ENCODE measurements at regions of chr10 and their contacts with region 1.

Region 1: GRCh38 chr10:5844345-5845048 is 31.3 kb upstream of the GDI2 start:
- DNase-seq: no peak
- H3K4me3 Mint-ChIP-seq: no peak overlapping the region
- H3K27ac Mint-ChIP-seq: peak overlapping the region; percentile 11
- H3K4me1 Mint-ChIP-seq: peaks cover 25% of the 10 kb centered on the region
- H3K27me3 Mint-ChIP-seq: peaks cover 5% of the 10 kb centered on the region

Region 2: DNA sequence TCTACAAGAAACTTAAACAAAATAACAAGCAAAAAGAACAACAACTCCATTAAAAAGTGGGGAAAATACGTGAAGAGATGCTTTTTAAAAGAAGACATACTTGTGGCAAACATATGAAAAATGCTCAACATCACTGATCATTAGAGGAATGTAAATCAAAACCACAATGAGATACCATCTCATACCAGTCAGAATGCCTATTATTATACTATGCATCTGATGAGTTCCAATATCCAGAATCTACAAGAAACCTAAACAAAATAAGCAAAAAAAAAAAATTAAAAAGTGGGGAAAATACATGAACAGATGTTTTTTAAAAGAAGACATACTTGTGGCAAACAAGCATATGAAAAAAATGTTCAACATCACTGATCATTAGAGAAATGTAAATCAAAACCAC is 779.8 kb before region 1 on chr10:
- CTCF ChIA-PET with region 1: no interaction called
- POLR2A ChIA-PET with region 1: no interaction called
- intact Hi-C with region 1: no loop called
- DNase-seq: no peak
- H3K4me3 Mint-ChIP-seq: no peak overlapping the region
- H3K27ac Mint-ChIP-seq: no peak overlapping the region
- H3K4me1 Mint-ChIP-seq: no peaks in the 10 kb centered on the region
- H3K27me3 Mint-ChIP-seq: no peaks in the 10 kb centered on the region

Region 3: DNA sequence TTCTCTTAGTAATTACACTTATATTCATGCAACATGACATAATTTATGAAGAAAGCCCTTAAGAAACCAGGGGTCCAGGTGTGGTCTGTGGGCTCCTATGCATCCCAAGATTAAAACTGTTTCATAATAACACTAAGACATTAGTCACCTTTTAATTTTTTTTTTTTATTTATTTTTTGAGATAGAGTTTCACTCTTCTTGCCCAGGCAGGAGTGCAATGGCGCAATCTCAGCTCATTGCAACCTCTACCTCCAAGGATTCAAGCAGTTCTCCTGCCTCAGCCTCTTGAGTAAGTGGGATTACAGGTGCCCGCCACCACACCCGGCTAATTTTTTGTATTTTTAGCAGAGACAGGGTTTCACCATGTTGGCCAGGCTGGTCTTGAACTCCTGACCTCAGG is 43.7 kb before region 1 on chr10:
- CTCF ChIA-PET with region 1: no interaction called
- POLR2A ChIA-PET with region 1: no interaction called
- intact Hi-C with region 1: no loop called
- DNase-seq: no peak
- H3K4me3 Mint-ChIP-seq: no peak overlapping the region
- H3K27ac Mint-ChIP-seq: no peak overlapping the region
- H3K4me1 Mint-ChIP-seq: peaks cover 16% of the 10 kb centered on the region
- H3K27me3 Mint-ChIP-seq: no peaks in the 10 kb centered on the region

Region 4: GRCh38 chr10:5818894-5819293 is 25.6 kb before region 1 on chr10:
- CTCF ChIA-PET with region 1: interaction called, 11 read pairs
- POLR2A ChIA-PET with region 1: interaction called, 12 read pairs
- intact Hi-C with region 1: loop called (anchors 1 kb)
- DNase-seq: no peak
- H3K4me3 Mint-ChIP-seq: no peak overlapping the region
- H3K27ac Mint-ChIP-seq: no peak overlapping the region
- H3K4me1 Mint-ChIP-seq: peaks cover 56% of the 10 kb centered on the region
- H3K27me3 Mint-ChIP-seq: no peaks in the 10 kb centered on the region

Region 5: DNA sequence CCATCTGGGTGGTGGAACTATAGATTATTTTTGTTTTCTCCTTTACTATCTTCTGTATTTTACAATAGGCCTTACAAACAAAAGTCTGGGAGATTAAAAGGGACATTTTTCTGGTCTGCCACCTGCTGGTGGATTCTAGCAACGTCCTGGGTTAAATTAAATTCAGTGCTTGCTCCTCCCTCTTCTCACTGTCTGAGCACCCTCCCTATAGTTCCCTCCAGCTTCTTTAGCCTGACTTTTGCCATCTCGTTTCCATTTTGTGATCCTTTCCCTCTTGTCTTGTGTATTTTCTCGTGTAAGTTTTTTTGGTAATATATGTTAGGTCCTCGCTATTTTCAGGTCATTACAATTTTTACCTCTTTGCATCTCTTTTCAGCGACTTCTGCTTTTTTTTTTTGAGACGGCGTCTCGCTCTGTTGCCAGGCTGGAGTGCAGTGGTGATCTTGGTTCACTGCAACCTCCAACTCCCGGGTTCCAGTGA is 29.1 kb after region 1 on chr10:
- CTCF ChIA-PET with region 1: interaction called, 16 read pairs
- POLR2A ChIA-PET with region 1: no interaction called
- intact Hi-C with region 1: no loop called
- DNase-seq: peak; percentile 81
- H3K4me3 Mint-ChIP-seq: no peak overlapping the region
- H3K27ac Mint-ChIP-seq: no peak overlapping the region
- H3K4me1 Mint-ChIP-seq: peaks cover 2% of the 10 kb centered on the region
- H3K27me3 Mint-ChIP-seq: no peaks in the 10 kb centered on the region